Activated CD4-positive, alpha-beta T cell treated with anti-CD3 and anti-CD28 coated beads for 36 hours (primary cell): ENCODE measurements at regions of chr17 and their contacts with region 1.

Region 1: DNA sequence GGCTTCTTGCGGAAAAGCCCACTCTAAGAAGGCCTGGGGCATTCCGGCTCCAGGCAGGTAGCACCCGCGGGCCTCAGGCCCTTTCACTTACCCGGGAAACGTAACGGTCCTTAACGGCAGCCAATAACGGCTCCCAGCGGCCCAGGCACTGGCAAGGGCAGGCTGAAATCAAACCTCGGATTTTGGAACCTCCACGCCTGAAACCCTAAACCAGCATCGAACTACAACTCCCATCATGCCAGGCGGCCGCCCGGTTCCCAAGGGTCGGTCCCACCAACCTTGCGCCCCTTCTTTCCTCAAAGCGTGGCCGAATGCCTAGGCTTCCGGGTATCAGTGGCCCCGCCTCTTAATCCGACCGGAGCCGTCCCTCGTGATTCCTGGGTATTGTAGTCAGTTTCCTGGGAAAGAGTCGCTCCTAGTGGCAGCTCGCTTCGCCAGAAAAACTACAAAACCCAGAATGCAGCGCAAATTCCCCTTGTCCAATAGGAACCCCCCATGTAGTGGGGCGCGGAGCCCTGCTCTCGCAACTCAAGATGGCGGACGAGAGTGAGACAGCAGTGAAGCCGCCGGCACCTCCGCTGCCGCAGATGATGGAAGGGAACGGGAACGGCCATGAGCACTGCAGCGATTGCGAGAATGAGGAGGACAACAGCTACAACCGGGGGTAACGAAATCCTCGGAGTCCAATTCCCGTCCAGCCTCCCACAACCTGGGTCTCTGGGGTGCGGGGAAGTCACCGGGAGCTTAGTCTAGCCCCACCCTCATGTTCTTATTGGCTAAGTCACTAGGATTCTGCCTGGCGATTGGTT is at the start of gene NMT1:
- DNase-seq: peak; percentile 97
- ATAC-seq: peak; percentile 92
- H3K4me3 Mint-ChIP-seq: peak within 1 kb of the TSS; percentile 84
- H3K27ac Mint-ChIP-seq: peak within 1 kb of the TSS; percentile 96
- H3K4me1 Mint-ChIP-seq: peaks cover 42% of the 10 kb centered on the region
- H3K27me3 Mint-ChIP-seq: no peaks in the 10 kb centered on the region
- total RNA-seq, gene NMT1: 170 to 175 TPM

Region 2: DNA sequence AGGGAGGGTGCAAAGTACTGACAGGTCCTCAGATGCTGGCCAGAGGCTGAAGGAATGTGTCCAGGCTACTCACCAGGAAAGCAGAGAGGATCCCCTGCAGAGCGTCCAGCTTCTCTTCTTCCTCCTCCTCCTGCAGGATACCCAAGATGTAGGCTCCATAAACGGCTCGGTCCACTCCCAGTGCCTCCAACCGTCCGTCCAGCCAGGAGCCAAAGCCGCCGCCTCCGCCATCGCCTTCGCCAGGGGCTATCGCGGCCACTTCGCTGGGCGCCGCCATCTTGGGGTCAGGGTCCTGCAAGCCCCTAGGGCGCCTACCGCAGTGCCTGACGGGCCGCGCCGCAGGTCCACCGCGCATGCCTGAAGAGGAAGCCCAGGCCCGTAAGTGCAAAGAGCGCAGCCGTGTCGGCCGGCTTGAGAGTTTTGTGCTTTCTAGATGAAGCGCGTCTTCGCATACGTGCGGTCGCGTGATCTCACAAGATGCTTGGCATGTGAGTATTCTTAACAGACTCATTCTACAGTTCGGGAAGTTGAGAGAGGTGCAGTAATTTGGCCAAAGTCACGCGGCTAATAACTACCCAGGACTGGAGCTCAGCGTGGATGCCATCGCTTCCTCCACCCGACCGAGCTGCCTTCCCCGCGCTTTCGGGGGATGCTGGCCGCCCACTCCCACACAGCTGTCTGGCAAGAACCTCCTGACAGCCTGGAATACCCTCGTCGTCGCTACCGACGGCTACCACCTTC is 371.4 kb before region 1 on chr17 and contains the start of gene CCDC43:
- CTCF ChIA-PET with region 1: no interaction called
- POLR2A ChIA-PET with region 1: no interaction called
- intact Hi-C with region 1: loop called in 1 of 2 experiments (anchors 2 kb)
- DNase-seq: peak; percentile 95
- ATAC-seq: peak; percentile 99
- H3K4me3 Mint-ChIP-seq: peak within 1 kb of the TSS; percentile 86
- H3K27ac Mint-ChIP-seq: peak within 1 kb of the TSS; percentile 93
- H3K4me1 Mint-ChIP-seq: peaks cover 26% of the 10 kb centered on the region
- H3K27me3 Mint-ChIP-seq: no peaks in the 10 kb centered on the region
- total RNA-seq, gene CCDC43: 31.8 to 33.7 TPM

Region 3: DNA sequence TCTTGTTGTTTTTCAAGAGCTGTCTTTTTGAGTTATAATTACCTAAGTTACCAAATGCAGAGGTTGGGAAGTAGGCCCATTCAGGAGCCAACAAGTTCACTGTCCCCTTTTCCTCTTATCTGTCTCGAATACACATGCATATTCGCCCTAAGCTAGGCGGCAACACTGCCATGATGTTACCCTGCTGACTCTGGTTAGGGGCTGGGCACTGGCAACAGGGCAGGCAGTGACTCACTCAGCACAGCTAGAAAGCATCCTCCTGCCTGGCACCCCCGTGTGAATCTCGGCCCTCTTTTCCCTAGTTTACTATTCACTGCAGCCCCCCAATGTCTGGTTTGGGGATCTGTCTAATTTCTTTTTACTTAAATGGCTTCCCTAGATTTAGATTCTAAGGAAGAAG is 338.7 kb before region 1 on chr17:
- CTCF ChIA-PET with region 1: no interaction called
- POLR2A ChIA-PET with region 1: no interaction called
- intact Hi-C with region 1: no loop called
- DNase-seq: no peak
- ATAC-seq: no peak
- H3K4me3 Mint-ChIP-seq: no peak overlapping the region
- H3K27ac Mint-ChIP-seq: no peak overlapping the region
- H3K4me1 Mint-ChIP-seq: no peaks in the 10 kb centered on the region
- H3K27me3 Mint-ChIP-seq: no peaks in the 10 kb centered on the region

Region 4: GRCh38 chr17:44899069-44899782 is 161.8 kb before region 1 on chr17 and contains the start of gene EFTUD2:
- CTCF ChIA-PET with region 1: no interaction called
- POLR2A ChIA-PET with region 1: no interaction called
- intact Hi-C with region 1: loop called (anchors 1 kb)
- DNase-seq: peak; percentile 95
- ATAC-seq: peak; percentile 94
- H3K4me3 Mint-ChIP-seq: peak within 1 kb of the TSS; percentile 98
- H3K27ac Mint-ChIP-seq: peak within 1 kb of the TSS; percentile 98
- H3K4me1 Mint-ChIP-seq: peaks cover 26% of the 10 kb centered on the region
- H3K27me3 Mint-ChIP-seq: no peaks in the 10 kb centered on the region
- total RNA-seq, gene EFTUD2: 175 to 203 TPM

Region 5: DNA sequence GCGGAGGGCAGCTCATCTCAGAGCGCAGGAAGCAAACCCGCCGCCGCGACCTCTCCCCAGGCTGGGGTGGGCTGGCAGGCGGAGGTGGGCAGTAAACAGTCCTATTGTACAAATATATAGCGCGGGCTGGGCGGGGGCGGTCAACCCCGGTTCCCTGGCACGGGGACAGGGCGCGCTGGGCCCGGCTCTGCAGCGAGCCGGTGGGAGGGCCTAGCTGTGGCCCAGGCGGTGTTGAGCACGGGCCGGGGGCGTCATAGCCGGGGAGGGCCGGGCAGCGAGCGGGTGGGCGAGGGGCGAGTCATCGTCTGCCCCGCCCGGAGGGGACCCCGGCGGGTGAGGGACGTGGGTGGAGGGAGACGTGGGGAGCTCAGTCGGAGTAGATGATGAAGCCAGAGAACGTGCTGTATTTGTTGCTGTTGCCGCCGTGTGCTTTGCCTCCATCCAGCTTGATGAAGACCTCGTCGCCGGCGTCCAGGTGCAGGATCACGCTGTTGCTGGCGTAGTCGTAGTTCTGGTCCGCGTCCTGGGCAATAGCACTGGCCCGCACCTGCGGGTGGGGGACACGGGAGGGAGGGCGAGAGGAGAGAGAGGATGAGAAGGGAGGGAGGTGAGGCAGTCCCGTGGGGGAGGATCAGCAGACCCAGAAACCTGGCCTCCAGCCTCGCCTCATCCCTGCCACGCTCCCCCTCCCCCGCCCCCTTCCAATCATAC is 101.0 kb before region 1 on chr17:
- CTCF ChIA-PET with region 1: no interaction called
- POLR2A ChIA-PET with region 1: no interaction called
- intact Hi-C with region 1: no loop called
- DNase-seq: peak; percentile 44
- ATAC-seq: peak; percentile 26
- H3K4me3 Mint-ChIP-seq: no peak overlapping the region
- H3K27ac Mint-ChIP-seq: no peak overlapping the region
- H3K4me1 Mint-ChIP-seq: peaks cover 7% of the 10 kb centered on the region
- H3K27me3 Mint-ChIP-seq: peaks cover 25% of the 10 kb centered on the region

Region 6: GRCh38 chr17:45098869-45099616 is 38.0 kb after region 1 on chr17:
- CTCF ChIA-PET with region 1: interaction called, 11 read pairs
- POLR2A ChIA-PET with region 1: no interaction called
- intact Hi-C with region 1: loop called in 1 of 2 experiments (anchors 2 kb)
- DNase-seq: peak; percentile 89
- ATAC-seq: peak; percentile 98
- H3K4me3 Mint-ChIP-seq: no peak overlapping the region
- H3K27ac Mint-ChIP-seq: no peak overlapping the region
- H3K4me1 Mint-ChIP-seq: no peaks in the 10 kb centered on the region
- H3K27me3 Mint-ChIP-seq: no peaks in the 10 kb centered on the region

Region 7: GRCh38 chr17:45247429-45248131 is 186.6 kb after region 1 on chr17:
- CTCF ChIA-PET with region 1: no interaction called
- POLR2A ChIA-PET with region 1: no interaction called
- intact Hi-C with region 1: loop called in 1 of 2 experiments (anchors 1 kb)
- DNase-seq: peak; percentile 99
- ATAC-seq: peak; percentile 89
- H3K4me3 Mint-ChIP-seq: peak overlapping the region; percentile 83
- H3K27ac Mint-ChIP-seq: peak overlapping the region; percentile 92
- H3K4me1 Mint-ChIP-seq: peaks cover 57% of the 10 kb centered on the region
- H3K27me3 Mint-ChIP-seq: no peaks in the 10 kb centered on the region